ENCODE measurements at regions of chr5 and their contacts with region 1.

Region 1: DNA sequence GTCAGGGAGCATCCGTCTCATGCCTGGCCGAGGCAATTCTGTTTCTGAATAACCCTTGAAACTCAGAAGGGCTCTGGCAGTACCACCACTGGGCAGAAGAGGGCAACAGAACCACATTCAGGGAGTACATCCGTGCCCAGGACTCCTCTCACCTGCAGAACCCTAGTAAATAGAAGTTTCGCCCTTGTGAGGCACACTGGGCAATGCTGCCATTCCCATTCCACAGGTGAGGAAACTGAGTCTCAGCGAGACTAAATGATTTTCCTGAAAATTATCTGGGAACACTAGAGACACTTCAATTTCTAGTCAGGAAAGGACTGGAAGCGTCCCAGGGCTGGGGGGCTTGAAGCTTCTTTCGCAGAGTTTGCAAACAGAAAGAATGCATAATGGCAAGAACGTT is 74.7 kb downstream of the FGF1 start:
- DNase-seq: no peak
- H3K4me3 ChIP-seq: no peak overlapping the region
- H3K27ac ChIP-seq: no peak overlapping the region
- H3K4me1 ChIP-seq: peaks cover 0 to 24% (median 14%) of the 10 kb centered on the region in 4 donors
- H3K27me3 ChIP-seq: no peaks in the 10 kb centered on the region
- CTCF ChIP-seq: peak in 2 of 3 experiments; percentile 87 to 94
- EP300 ChIP-seq: no peak
- POLR2A ChIP-seq: no peak

Region 2: DNA sequence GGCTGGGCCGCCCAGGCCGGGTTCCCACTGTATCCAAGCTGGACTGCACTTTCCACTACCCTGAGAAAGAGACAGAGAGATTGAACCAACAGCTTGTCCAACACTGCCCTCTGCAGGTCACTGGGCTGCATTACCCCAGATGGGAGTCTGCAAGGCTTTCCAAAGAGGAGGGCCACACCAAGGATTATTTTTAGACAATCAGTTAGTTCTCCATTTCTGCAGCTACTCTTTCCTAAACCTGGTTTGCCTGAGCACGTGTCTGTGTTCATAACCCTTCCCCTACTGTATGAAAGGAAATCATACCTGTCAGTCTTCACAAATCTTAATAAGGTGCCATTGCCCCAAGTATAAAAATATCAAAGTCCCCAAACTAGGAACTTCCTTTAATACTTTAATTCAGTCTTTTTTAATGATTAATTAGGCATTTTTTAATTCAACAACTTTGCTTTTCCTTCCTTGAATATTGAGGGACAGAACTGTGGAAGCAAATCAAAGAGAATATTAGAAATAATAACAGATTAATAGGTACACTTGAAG is 88.1 kb after region 1 on chr5:
- intact Hi-C with region 1: loop called (anchors 2 kb)
- DNase-seq: peak; percentile 98
- H3K4me3 ChIP-seq: no peak overlapping the region
- H3K27ac ChIP-seq: peak overlapping the region; percentile 62 to 77 (median 74)
- H3K4me1 ChIP-seq: peaks cover 28 to 36% (median 31%) of the 10 kb centered on the region in 4 donors
- H3K27me3 ChIP-seq: no peaks in the 10 kb centered on the region
- CTCF ChIP-seq: peak in 2 of 3 experiments; percentile 98 to 99
- EP300 ChIP-seq: no peak
- POLR2A ChIP-seq: no peak

Region 3: DNA sequence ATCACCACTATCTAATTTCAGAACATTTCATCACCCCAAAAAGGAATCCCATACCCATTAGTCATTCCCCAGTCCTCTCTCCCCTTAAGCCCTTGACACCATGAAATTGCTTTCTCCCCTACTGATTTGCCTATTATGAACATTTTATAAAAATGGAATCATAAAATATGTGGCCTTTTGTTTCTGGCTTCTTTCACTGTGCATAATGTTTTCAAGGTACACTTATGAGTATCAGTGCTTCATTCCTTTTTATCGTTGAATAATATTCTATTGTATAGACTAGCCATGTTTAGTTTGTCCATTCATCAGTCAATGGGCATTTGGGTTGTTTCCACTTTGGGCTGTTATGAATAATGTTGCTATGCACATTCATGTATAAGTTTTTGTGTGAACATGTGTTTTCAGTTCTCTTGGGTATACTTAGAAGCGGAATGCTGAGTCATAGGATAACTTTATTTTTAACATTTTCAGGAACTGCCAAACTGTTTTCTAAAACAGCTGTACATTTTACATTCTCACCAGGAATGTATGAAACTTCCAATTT is 115.1 kb after region 1 on chr5:
- intact Hi-C with region 1: no loop called
- DNase-seq: no peak
- H3K4me3 ChIP-seq: no peak overlapping the region
- H3K27ac ChIP-seq: no peak overlapping the region
- H3K4me1 ChIP-seq: peaks cover 0 to 13% (median 12%) of the 10 kb centered on the region in 4 donors
- H3K27me3 ChIP-seq: peaks cover 0 to 7% (median 0%) of the 10 kb centered on the region in 4 donors
- CTCF ChIP-seq: no peak
- EP300 ChIP-seq: no peak
- POLR2A ChIP-seq: no peak

Measured in esophagus muscularis mucosa (tissue), 4 donors.